ENCODE measurements at regions of chr13 and their contacts with region 1.

Region 1: DNA sequence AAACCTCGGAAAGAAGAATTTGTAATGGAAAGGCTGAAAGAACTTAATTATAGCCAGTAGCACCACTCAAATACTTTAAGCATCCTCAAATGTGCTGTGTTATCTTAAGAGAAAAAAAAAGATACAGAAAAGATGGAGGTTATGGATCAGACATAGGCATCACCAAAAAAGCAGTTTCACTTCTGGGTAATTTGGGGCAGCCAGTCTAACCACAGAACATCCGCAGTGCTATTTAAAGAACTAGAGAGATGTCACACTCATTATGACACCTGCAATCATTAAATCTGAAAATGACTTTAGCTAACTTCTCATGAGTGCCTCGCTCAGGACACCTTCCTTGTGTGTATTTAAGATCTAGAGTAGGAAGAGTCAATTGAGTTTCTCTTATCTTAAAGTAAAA is 211.8 kb downstream of the RBM26 start:
- DNase-seq: peak; percentile 92
- ATAC-seq: peak; percentile 93
- H3K4me3 ChIP-seq: peak overlapping the region; percentile 43; the same call in 1 of the 2 replicates
- H3K27ac ChIP-seq: peak overlapping the region; percentile 93
- H3K4me1 ChIP-seq: peaks cover 43% of the 10 kb centered on the region
- H3K27me3 ChIP-seq: no peaks in the 10 kb centered on the region
- CTCF ChIP-seq: no peak
- EP300 ChIP-seq: peak; percentile 89 to 95
- POLR2A ChIP-seq: no peak
- RAD21 ChIP-seq: 0 out of 2 replicates have a peak, but pooled peaks have one; percentile 12

Region 2: DNA sequence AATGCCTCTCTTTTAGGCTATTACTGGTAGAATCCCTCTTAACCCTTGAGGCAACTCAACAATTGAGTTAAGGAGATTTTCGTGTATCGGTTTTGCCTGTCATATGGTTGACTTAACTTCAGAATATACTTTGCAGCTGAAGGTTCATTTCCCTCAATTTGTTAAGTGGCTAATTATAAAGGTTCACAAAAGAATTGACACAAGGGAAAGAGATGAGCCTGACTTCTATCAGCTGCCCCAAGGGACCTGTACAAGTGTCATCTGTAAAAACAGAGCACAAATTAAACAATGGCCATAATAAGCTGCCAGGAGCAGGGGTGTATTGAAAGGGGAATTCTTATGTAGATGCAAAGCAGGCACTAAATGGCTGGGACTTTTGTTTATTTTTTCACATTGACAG is 200.5 kb before region 1 on chr13:
- CTCF ChIA-PET with region 1: no interaction called
- POLR2A ChIA-PET with region 1: no interaction called
- RAD21 ChIA-PET with region 1: interaction called, 3 read pairs
- SMC1A ChIA-PET with region 1: interaction called, 7 read pairs
- in situ Hi-C with region 1: no loop called
- intact Hi-C with region 1: loop called (anchors 5 kb)
- DNase-seq: peak; percentile 21
- ATAC-seq: peak; percentile 76
- H3K4me3 ChIP-seq: no peak overlapping the region
- H3K27ac ChIP-seq: no peak overlapping the region
- H3K4me1 ChIP-seq: no peaks in the 10 kb centered on the region
- H3K27me3 ChIP-seq: no peaks in the 10 kb centered on the region
- CTCF ChIP-seq: no peak
- EP300 ChIP-seq: peak; percentile 75 to 79; a peak in 3 of 4 replicates
- POLR2A ChIP-seq: no peak
- RAD21 ChIP-seq: no peak

Region 3: DNA sequence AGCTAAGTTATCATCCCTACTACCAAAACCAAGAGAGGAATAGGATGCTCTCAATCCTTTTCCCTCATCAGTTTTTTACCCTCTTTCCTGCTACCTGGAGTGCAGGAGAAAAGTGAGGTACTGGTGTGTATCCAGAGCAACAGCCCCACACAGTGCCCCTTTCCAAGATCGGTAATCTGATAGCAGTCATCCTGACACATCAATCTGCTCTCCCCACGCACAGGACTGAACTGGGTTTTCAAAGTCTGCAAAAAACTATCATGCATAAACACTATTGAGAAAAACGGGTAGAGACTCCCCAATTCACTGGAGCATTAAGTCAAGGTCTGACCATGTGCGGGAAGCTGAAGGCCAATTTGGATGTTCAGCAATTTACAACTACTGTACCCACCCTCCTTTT is 73.0 kb before region 1 on chr13:
- CTCF ChIA-PET with region 1: no interaction called
- POLR2A ChIA-PET with region 1: no interaction called
- RAD21 ChIA-PET with region 1: no interaction called
- SMC1A ChIA-PET with region 1: no interaction called
- in situ Hi-C with region 1: no loop called
- intact Hi-C with region 1: no loop called
- DNase-seq: no peak
- ATAC-seq: no peak
- H3K4me3 ChIP-seq: no peak overlapping the region
- H3K27ac ChIP-seq: no peak overlapping the region
- H3K4me1 ChIP-seq: no peaks in the 10 kb centered on the region
- H3K27me3 ChIP-seq: no peaks in the 10 kb centered on the region; a peak in 1 of 4 replicates
- CTCF ChIP-seq: no peak
- EP300 ChIP-seq: no peak
- POLR2A ChIP-seq: no peak
- RAD21 ChIP-seq: no peak

Region 4: DNA sequence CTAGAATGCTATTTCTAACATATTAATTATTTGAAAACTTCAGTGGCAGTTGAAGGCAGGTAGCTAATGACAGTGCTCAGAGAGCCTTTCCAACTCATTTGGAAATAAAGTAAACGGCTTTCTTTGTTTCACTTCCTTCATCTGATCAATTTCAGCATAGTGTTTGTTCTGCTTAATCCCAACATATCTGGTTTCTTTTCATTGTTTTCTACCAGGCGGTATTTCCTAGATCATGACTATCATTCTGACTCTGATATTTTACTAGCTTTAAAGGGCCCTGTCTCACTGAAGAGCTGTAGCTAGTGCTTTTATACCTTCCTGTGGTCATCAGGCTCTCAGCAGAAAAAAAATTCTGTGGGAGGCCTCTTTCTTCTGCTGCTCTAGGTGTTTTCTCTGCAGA is 33.1 kb after region 1 on chr13:
- CTCF ChIA-PET with region 1: interaction called, 4 read pairs
- POLR2A ChIA-PET with region 1: interaction called, 3 read pairs
- RAD21 ChIA-PET with region 1: interaction called, 5 read pairs
- SMC1A ChIA-PET with region 1: interaction called, 12 read pairs
- in situ Hi-C with region 1: no loop called
- intact Hi-C with region 1: loop called (anchors 5 kb)
- DNase-seq: peak; percentile 42
- ATAC-seq: peak; percentile 91
- H3K4me3 ChIP-seq: no peak overlapping the region; the same call in 1 of the 2 replicates
- H3K27ac ChIP-seq: peak overlapping the region; percentile 30; the same call in 1 of the 2 replicates
- H3K4me1 ChIP-seq: peaks cover 10% of the 10 kb centered on the region
- H3K27me3 ChIP-seq: no peaks in the 10 kb centered on the region
- CTCF ChIP-seq: no peak
- EP300 ChIP-seq: peak; percentile 47 to 54; a peak in 1 of 4 replicates
- POLR2A ChIP-seq: no peak
- RAD21 ChIP-seq: 0 out of 2 replicates have a peak, but pooled peaks have one; percentile 7